PC-9 (cell line): ENCODE measurements at regions of chr14 and their contacts with region 1.

Region 1: DNA sequence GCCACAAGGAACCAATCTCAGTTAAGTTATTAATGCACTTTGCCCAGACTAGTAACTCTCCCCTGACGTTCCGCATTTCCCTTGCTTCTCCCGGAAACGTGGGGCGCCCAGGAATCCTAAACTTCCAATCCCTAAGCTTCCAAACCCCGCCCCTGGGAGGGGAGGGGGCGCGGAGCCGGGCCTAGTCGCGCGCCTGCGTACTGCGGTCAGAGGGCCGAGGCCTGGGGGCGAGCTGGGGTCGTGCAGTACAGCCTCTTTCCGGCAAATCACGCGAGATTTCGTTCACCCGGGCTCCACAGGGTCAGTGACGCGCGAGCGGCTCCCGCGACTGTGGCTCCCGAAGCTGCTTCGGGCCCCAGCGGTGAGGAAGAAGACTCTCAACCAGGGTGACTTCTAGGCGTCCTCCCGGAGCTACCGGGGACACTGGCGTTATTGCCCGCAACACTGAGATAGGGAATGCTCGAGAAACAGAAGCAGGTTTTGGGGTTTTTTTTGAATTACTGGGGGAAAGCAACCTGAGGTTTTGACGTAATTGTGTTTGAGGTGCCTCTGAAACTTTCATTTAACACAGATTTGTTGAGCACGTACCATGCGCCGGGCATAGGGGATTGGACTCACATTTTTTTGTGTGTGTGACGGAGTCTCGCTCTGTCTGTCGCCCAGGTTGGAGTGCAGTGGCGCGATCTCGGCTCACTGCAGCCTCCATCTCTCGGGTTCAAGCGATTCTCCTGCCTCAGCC is at the start of gene PTGR2:
- DNase-seq: peak; percentile 90 to 98
- H3K4me3 ChIP-seq: peak within 1 kb of the TSS; percentile 68
- H3K27ac ChIP-seq: peak within 1 kb of the TSS; percentile 89
- H3K4me1 ChIP-seq: peaks cover 32% of the 10 kb centered on the region
- H3K27me3 ChIP-seq: no peaks in the 10 kb centered on the region
- CTCF ChIP-seq: no peak
- total RNA-seq, gene PTGR2: 19.5 and 21.8 TPM in 2 replicates

Region 2: GRCh38 chr14:73713803-73714655 is 137.8 kb before region 1 on chr14 and contains the start of gene PNMA1:
- CTCF ChIA-PET with region 1: no interaction called
- POLR2A ChIA-PET with region 1: interaction called, 16 read pairs
- intact Hi-C with region 1: no loop called
- DNase-seq: peak; percentile 50 to 85
- H3K4me3 ChIP-seq: peak within 1 kb of the TSS; percentile 94
- H3K27ac ChIP-seq: peak within 1 kb of the TSS; percentile 46; the same call in 1 of the 2 replicates
- H3K4me1 ChIP-seq: peaks cover 31% of the 10 kb centered on the region
- H3K27me3 ChIP-seq: no peaks in the 10 kb centered on the region
- CTCF ChIP-seq: no peak
- total RNA-seq, gene PNMA1: 13.6 and 16.8 TPM in 2 replicates

Region 3: GRCh38 chr14:73759714-73760597 is 91.9 kb before region 1 on chr14:
- CTCF ChIA-PET with region 1: interaction called, 3 read pairs
- POLR2A ChIA-PET with region 1: interaction called, 14 read pairs
- intact Hi-C with region 1: loop called (anchors 1 kb)
- DNase-seq: peak; percentile 96
- H3K4me3 ChIP-seq: peak overlapping the region; percentile 90
- H3K27ac ChIP-seq: peak overlapping the region; percentile 76
- H3K4me1 ChIP-seq: peaks cover 54% of the 10 kb centered on the region
- H3K27me3 ChIP-seq: no peaks in the 10 kb centered on the region
- CTCF ChIP-seq: no peak

Region 4: DNA sequence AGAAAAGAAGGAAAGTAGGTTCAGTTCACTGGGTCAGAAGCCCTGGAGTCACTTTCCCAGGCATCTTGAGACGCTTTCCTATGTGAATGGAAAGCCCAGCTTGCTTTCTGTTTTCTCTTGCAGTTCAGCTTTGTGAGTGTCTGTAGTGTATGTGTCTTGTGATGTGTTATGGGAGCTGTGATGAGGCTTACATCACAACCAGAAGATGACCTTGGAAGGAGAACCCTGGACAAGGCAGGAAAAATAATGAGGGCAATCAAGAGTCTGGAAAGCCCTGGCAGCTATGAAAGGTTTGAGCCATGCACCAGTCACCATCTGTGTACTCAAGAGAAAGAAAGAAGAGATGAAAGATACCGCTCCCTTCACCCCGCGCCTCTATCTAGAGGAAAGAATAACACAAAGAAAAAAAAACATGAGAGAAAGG is 35.4 kb before region 1 on chr14:
- CTCF ChIA-PET with region 1: no interaction called
- POLR2A ChIA-PET with region 1: interaction called, 12 read pairs
- intact Hi-C with region 1: no loop called
- DNase-seq: no peak
- H3K4me3 ChIP-seq: no peak overlapping the region
- H3K27ac ChIP-seq: no peak overlapping the region
- H3K4me1 ChIP-seq: peaks cover 12% of the 10 kb centered on the region
- H3K27me3 ChIP-seq: no peaks in the 10 kb centered on the region
- CTCF ChIP-seq: no peak

Region 5: DNA sequence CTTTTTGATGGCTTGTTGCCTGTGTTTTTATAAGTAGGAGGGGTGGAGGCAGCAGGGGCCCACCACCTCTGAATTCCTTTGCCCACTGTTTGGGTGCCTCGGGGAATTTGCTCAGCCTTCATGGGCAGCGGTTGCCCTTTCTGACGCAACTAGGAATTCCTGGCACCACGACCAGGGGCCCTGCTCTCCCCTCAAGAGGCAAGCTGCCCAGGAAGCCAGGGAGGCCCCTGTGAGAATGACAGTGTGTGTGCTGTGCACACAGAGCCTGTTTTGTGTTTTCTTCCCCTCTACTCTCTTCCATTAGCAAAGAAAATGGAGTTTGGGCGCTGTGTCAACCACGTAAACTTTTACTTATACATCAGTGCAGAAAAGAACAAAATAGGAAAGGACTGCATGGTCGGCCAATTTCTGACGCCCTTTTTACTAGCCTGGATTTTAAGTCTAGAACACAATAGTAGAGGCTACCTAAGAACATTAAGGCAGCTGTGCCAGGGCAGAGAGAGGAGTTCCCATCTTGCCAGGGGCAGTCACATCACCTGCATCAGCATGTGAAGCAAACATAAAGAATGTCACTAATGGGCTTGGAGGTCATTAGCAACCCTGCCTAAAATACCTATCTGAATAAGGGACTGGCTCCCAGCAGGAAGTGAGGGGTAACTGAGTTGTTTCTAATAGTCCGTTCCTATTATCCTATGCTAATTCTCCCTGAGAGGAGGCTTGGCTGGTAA is 18.1 kb before region 1 on chr14:
- CTCF ChIA-PET with region 1: interaction called, 3 read pairs
- POLR2A ChIA-PET with region 1: no interaction called
- intact Hi-C with region 1: loop called (anchors 2 kb)
- DNase-seq: peak; percentile 32 to 58
- H3K4me3 ChIP-seq: no peak overlapping the region
- H3K27ac ChIP-seq: peak overlapping the region; percentile 47
- H3K4me1 ChIP-seq: peaks cover 41% of the 10 kb centered on the region
- H3K27me3 ChIP-seq: no peaks in the 10 kb centered on the region
- CTCF ChIP-seq: no peak

Region 6: DNA sequence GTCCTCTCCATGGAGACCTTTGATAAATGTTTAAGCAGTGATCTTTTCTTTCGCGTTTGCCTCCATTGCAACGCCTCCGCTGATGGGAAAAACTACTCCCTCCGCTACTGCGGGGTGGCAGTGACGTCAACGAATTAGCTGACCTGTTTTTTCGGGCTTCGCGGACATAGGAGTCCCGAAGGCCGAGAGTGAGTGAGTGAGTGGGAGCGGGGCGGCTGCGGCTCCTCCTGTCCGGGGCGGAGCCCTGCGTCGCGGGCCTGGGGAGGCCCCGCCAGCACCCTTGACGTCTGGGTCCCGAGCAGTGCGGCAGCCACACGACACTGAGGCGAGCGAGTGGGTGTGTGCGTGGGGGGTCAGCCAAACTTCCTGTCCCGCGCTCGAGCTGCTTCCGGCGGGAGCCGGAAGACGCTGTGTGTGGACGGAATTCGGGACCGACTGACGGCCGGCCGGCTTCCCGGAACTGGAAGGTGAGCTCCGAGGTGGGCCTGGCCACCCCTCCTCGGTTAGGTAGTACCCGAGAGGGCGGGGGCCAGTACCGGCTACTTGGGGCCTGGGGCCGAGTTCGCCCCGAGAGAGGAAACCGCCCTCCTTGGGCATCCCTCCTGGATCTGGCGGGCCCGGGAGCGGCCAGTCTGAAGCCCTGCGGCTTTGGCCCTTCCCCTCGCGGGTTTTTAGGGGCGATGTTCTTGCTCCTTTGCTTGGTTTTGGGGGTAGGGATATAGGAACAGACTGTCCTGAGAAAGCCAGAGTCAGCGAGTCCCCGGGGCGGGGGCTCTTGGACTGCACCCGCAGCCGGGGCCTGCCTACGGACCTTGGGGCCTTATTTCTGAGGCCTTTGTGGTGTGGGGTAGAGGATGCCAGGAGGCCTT is 34.9 kb after region 1 on chr14 and contains the start of gene ZNF410:
- CTCF ChIA-PET with region 1: no interaction called
- POLR2A ChIA-PET with region 1: interaction called, 14 read pairs
- intact Hi-C with region 1: loop called (anchors 2 kb)
- DNase-seq: peak; percentile 85 to 91
- H3K4me3 ChIP-seq: peak within 1 kb of the TSS; percentile 91
- H3K27ac ChIP-seq: peak within 1 kb of the TSS; percentile 70
- H3K4me1 ChIP-seq: peaks cover 32% of the 10 kb centered on the region
- H3K27me3 ChIP-seq: no peaks in the 10 kb centered on the region
- CTCF ChIP-seq: no peak
- total RNA-seq, gene ZNF410: 38.6 and 40.2 TPM in 2 replicates

Region 7: DNA sequence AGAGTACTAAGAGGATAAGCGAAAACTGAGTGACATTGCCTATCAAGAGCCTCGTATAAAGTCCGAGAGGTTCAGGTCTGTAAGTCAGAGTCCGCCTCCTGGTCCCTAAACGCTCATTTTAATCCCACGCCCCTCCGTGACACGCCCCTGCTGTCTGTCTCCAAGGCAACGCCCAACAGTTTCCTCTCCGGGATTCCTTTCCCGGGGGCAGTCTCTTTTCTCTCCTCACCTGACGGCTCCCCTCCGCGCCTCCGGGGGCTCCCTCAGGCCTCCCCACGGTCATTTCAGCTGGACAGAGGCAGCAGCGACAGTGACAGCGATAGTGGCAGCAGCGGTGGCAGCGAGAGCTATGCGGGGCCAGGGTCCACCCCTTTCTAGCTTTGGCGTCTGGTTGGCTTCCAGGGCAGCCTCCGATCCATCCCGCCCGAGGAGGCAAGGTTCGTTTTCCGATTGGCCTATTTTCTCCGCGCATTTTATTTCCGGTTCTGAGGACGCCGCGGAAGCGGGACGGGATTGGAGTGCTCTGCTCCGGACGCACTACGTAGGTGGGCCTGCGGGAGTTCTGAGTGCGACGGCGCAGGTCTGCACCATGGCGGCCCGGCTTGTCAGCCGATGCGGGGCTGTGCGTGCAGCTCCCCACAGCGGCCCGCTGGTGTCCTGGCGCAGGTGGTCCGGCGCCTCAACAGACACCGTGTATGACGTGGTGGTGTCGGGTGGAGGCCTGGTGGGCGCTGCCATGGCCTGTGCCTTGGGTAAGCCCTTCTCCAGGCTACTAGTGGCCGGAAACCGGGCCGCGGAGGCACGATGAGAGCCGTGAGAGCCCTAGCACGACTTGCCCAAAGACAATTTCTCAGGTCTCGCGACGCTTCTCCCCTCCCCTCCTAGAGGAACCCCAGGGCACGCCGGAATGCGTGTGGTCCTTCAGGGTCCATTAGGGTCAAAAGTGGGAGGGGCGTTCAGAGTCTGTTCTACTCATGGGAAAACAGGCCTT is 98.2 kb after region 1 on chr14 and contains the starts of genes COQ6 and FAM161B:
- CTCF ChIA-PET with region 1: no interaction called
- POLR2A ChIA-PET with region 1: no interaction called
- intact Hi-C with region 1: loop called (anchors 1 kb)
- DNase-seq: peak; percentile 95 to 96
- H3K4me3 ChIP-seq: peak within 1 kb of the TSS; percentile 83
- H3K27ac ChIP-seq: peak within 1 kb of the TSS; percentile 69
- H3K4me1 ChIP-seq: peaks cover 6% of the 10 kb centered on the region; the same call in 1 of the 2 replicates
- H3K27me3 ChIP-seq: no peaks in the 10 kb centered on the region
- CTCF ChIP-seq: no peak
- total RNA-seq, gene COQ6: 25.4 and 25.7 TPM in 2 replicates
- total RNA-seq, gene FAM161B: 1.6 TPM in 2 replicates